Body of pancreas (tissue), 4 donors: ENCODE measurements at regions of chr4 and their contacts with region 1.

Region 1: GRCh38 chr4:128871948-128872347 is 62.4 kb downstream of the JADE1 start:
- DNase-seq: no peak
- ATAC-seq: no peak
- H3K4me3 ChIP-seq: no peak overlapping the region
- H3K27ac ChIP-seq: no peak overlapping the region
- H3K4me1 ChIP-seq: no peaks in the 10 kb centered on the region
- H3K27me3 ChIP-seq: no peaks in the 10 kb centered on the region
- CTCF ChIP-seq: no peak
- POLR2A ChIP-seq: no peak

Region 2: GRCh38 chr4:128823025-128823661 is 48.8 kb before region 1 on chr4:
- intact Hi-C with region 1: loop called (anchors 10 kb)
- DNase-seq: no peak
- ATAC-seq: peak; percentile 41
- H3K4me3 ChIP-seq: no peak overlapping the region
- H3K27ac ChIP-seq: no peak overlapping the region
- H3K4me1 ChIP-seq: peaks cover 89% of the 10 kb centered on the region
- H3K27me3 ChIP-seq: no peaks in the 10 kb centered on the region
- CTCF ChIP-seq: no peak
- POLR2A ChIP-seq: no peak